Activated CD8-positive, alpha-beta memory T cell treated with anti-CD3 and anti-CD28 coated beads, Interleukin-2, amount 10 ng/mL, durations not matched to agents 7 days and 5 days (primary cell): ENCODE measurements at regions of chr12 and their contacts with region 1.

Region 1: GRCh38 chr12:48851883-48852733 is at the start of gene DDX23:
- DNase-seq: peak; percentile 97
- ATAC-seq: peak; percentile 94
- H3K4me3 Mint-ChIP-seq: peak within 1 kb of the TSS; percentile 96
- H3K27ac Mint-ChIP-seq: peak within 1 kb of the TSS; percentile 97
- H3K4me1 Mint-ChIP-seq: peaks cover 33% of the 10 kb centered on the region
- H3K27me3 Mint-ChIP-seq: no peaks in the 10 kb centered on the region
- total RNA-seq, gene DDX23: 146 to 157 TPM

Region 2: DNA sequence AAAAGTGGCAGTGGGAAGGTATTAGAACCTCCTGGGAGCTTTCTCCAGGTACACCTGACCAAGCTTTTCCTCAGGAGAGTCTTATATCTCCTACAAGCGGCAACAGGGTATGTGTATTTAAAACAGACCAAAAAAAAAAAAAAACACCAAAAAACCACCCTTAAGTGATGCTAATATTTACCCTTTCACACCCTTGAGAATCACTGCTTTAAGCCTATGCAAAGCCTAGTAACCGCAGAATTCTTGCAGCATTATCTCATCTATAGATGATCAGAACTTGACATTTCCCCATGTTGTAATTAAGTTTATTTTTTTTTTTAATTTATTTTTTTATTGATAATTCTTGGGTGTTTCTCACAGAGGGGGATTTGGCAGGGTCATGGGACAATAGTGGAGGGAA is 520.7 kb before region 1 on chr12:
- CTCF ChIA-PET with region 1: no interaction called
- DNase-seq: no peak
- ATAC-seq: no peak
- H3K4me3 Mint-ChIP-seq: no peak overlapping the region
- H3K27ac Mint-ChIP-seq: no peak overlapping the region
- H3K4me1 Mint-ChIP-seq: no peaks in the 10 kb centered on the region
- H3K27me3 Mint-ChIP-seq: peaks cover 6% of the 10 kb centered on the region

Region 3: DNA sequence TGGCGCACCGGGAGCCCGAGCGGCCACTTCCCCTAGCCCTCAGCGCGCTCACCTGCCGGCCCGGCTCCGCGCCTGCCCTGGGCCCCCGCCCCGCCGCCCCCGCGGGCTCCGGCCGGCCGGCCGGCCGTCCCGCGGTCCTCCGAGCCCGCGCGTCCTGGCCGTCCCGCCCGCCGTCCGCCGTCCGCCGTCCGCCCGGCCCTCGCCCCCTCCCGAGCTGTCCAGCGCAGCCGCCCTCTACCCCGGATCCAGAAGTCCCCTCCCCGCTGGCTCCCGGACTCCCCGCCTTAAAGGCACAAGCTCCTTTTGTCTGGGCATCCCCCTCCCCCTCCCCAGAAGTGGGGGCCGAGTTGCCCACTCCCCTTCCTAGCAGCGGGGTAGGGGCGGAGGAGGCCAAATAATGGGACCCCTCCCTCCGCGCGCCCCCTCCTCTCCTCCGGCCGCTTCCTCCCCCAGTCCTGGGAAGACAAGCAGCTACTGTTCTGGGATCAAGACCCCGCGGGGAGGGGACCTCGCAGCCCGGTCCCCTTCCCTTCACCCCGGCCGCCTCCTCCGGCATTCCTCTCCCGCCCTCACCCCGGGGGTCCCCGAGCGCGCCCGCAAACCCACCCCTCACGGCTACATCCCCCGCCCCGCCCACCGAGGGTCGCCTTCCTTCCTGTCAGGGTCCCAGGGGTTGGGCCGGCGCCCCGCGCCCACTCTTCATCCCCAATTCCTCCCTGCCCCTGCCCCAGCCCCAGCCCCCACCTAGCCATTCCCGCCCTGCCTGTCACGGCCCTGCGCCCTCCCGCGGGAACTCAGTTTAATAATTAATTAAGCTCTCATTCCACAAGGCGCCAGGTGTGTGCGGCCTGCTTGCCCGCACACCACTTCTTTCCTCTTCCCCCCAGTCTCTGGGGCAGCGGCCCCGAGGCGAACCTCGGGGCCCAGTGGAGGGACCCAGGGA is 63.0 kb before region 1 on chr12 and contains the start of gene ADCY6:
- CTCF ChIA-PET with region 1: no interaction called
- DNase-seq: no peak
- ATAC-seq: no peak
- H3K4me3 Mint-ChIP-seq: no peak within 1 kb of the TSS
- H3K27ac Mint-ChIP-seq: no peak within 1 kb of the TSS
- H3K4me1 Mint-ChIP-seq: peaks cover 4% of the 10 kb centered on the region
- H3K27me3 Mint-ChIP-seq: peaks cover 57% of the 10 kb centered on the region
- total RNA-seq, gene ADCY6: 0.15 to 0.42 TPM

Region 4: GRCh38 chr12:48865434-48866290 is 13.6 kb after region 1 on chr12 and contains the start of gene RND1:
- CTCF ChIA-PET with region 1: interaction called, 86 read pairs
- DNase-seq: peak; percentile 90
- ATAC-seq: peak; percentile 97
- H3K4me3 Mint-ChIP-seq: peak within 1 kb of the TSS; percentile 83
- H3K27ac Mint-ChIP-seq: peak within 1 kb of the TSS; percentile 79
- H3K4me1 Mint-ChIP-seq: peaks cover 26% of the 10 kb centered on the region
- H3K27me3 Mint-ChIP-seq: peaks cover 24% of the 10 kb centered on the region
- total RNA-seq, gene RND1: 2.7 to 4.2 TPM

Region 5: DNA sequence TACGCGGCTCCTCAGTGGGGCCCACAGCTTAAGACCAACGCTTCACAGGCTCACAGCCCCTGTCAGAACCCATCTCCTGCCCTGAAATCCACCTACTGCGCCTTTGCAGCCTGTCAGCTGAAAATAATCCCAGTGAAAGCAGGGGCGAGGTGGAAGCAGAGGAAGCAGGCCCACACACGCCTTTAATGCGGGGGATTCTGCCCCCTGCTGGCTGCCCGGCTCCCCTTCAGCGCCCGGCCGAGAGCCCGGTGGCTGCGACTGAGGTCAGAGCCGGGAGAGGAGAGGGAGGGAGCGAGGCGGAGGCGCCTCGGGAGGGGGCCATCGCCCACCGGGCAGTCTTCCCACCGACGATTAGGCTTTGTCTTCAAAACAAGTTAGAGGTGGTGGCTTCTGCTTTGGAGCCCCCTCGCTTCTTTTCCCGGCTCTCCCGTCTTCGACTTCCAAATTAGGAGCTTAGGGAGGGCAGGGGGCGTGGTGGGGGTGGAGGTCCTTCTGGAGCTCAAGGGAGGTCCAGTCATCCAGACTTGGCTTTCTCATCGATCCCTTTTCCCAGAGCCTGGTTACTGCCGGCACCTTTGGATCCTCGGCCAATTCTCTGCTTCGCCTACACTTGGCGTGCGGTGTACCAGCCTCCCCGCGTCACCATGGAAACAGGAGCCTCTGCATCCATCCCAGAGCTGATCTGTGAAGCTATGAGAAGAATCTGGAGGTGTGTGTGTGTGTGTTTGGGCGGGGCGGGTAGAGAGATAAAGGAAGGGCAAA is 38.7 kb after region 1 on chr12:
- CTCF ChIA-PET with region 1: interaction called, 211 read pairs
- DNase-seq: peak; percentile 81
- ATAC-seq: peak; percentile 100
- H3K4me3 Mint-ChIP-seq: peak overlapping the region; percentile 7
- H3K27ac Mint-ChIP-seq: no peak overlapping the region
- H3K4me1 Mint-ChIP-seq: peaks cover 10% of the 10 kb centered on the region
- H3K27me3 Mint-ChIP-seq: peaks cover 17% of the 10 kb centered on the region

Region 6: GRCh38 chr12:48936379-48936979 is 84.4 kb after region 1 on chr12:
- CTCF ChIA-PET with region 1: interaction called, 157 read pairs
- DNase-seq: peak; percentile 88
- ATAC-seq: peak; percentile 57
- H3K4me3 Mint-ChIP-seq: no peak overlapping the region
- H3K27ac Mint-ChIP-seq: peak overlapping the region; percentile 39
- H3K4me1 Mint-ChIP-seq: peaks cover 28% of the 10 kb centered on the region
- H3K27me3 Mint-ChIP-seq: no peaks in the 10 kb centered on the region

Region 7: GRCh38 chr12:48988030-48988649 is 136.0 kb after region 1 on chr12:
- CTCF ChIA-PET with region 1: interaction called, 61 read pairs
- DNase-seq: peak; percentile 82
- ATAC-seq: peak; percentile 88
- H3K4me3 Mint-ChIP-seq: no peak overlapping the region
- H3K27ac Mint-ChIP-seq: no peak overlapping the region
- H3K4me1 Mint-ChIP-seq: peaks cover 7% of the 10 kb centered on the region
- H3K27me3 Mint-ChIP-seq: peaks cover 66% of the 10 kb centered on the region